IMR-90 (cell line): ENCODE measurements at regions of chr3 and their contacts with region 1.

Region 1: DNA sequence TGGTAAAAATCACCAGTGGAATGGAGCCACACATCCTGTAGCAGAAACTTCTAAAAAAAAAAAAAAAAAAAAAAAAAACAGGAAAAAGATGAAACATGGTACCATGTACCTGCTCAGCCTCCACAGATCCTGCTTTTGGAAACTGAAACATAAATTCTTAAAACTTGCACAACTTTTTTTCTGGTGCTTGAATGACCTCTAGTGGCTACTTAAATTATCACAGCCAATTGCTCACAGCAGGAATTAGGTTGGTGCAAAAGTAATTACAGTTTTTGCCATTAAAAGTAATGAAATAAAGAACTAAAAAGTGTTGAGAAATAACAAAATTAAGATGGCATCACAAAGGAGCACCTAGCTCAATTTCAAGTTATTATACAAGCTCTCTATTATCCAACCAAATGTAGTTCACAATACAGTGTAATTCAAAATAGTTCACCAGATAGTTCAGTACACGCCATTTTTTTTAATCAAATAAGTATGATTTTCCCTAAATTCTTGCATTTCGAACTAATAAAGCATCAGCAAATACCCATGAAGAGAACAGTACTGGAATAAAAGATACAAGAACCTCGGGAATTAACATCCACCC is 80.6 kb downstream of the ULK4 start:
- DNase-seq: peak; percentile 48
- ATAC-seq: no peak
- H3K4me3 ChIP-seq: no peak overlapping the region
- H3K27ac ChIP-seq: no peak overlapping the region
- H3K4me1 ChIP-seq: no peaks in the 10 kb centered on the region
- H3K27me3 ChIP-seq: no peaks in the 10 kb centered on the region
- CTCF ChIP-seq: peak; percentile 77
- POLR2A ChIP-seq: no peak
- RAD21 ChIP-seq: peak; percentile 72

Region 2: GRCh38 chr3:41690766-41691563 is 190.4 kb before region 1 on chr3:
- CTCF ChIA-PET with region 1: no interaction called
- POLR2A ChIA-PET with region 1: no interaction called
- dilution Hi-C with region 1: no loop called
- in situ Hi-C with region 1: no loop called
- intact Hi-C with region 1: loop called (anchors 2 kb)
- DNase-seq: no peak
- ATAC-seq: no peak
- H3K4me3 ChIP-seq: no peak overlapping the region
- H3K27ac ChIP-seq: no peak overlapping the region
- H3K4me1 ChIP-seq: peaks cover 10% of the 10 kb centered on the region
- H3K27me3 ChIP-seq: no peaks in the 10 kb centered on the region
- CTCF ChIP-seq: no peak
- POLR2A ChIP-seq: no peak
- RAD21 ChIP-seq: no peak